HCT116 (cell line): ENCODE measurements at regions of chr1 and their contacts with region 1.

Region 1: DNA sequence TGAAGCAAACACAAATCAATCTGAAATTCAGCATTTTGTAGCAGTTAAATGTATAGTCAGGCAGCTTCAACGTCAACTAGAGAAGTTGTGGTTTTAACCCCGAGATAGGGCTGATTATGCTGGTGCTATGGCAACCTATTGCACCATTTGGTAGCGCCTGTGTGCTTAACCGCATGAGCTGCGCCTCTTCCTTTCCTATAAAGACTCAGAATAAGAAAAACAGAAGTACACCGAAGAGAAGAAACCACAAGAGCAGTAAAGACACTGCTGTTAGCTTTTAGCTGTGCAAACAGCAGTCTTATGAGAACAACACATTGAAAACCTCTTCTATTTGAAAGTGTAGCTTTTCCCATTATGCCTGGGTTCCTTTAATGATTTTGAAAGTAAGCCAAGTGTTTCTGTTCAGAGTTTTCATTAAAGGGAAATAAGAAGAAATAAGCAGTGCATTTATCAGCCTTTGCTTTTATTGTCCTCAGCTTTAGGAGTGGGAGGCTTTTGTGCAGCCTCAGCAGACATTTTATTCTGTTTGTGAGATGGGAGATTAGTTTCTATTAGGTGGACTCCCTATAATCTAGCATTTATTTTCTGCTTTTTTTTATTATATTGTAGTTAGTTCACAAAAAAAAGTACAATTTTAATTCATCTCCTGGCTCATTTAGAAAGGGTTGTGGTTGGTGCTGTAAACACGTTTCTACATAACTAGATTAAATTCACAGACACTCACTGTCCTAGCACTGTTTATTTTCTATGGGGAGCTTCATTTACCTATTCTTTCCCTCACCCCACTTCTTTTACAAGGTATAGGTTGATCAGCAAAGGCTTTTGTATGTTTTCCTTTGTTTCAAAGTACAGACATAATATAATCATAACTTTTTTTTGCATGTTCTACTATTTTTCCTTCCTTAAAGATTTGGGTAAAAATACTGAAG is 43.3 kb downstream of the PTPRC start:
- DNase-seq: no peak
- ATAC-seq: no peak
- H3K4me3 ChIP-seq: no peak overlapping the region
- H3K27ac ChIP-seq: no peak overlapping the region
- H3K4me1 ChIP-seq: no peaks in the 10 kb centered on the region
- H3K27me3 ChIP-seq: no peaks in the 10 kb centered on the region
- CTCF ChIP-seq: no peak
- POLR2A ChIP-seq: no peak
- RAD21 ChIP-seq: no peak

Region 2: GRCh38 chr1:197521118-197521739 is 1160.9 kb before region 1 on chr1:
- CTCF ChIA-PET with region 1: interaction called, 8 read pairs
- POLR2A ChIA-PET with region 1: no interaction called
- RAD21 ChIA-PET with region 1: no interaction called
- intact Hi-C with region 1: loop called (anchors 5 kb)
- DNase-seq: peak; percentile 16
- ATAC-seq: peak; percentile 60; the same call in 1 of the 2 replicates
- H3K4me3 ChIP-seq: no peak overlapping the region
- H3K27ac ChIP-seq: no peak overlapping the region
- H3K4me1 ChIP-seq: no peaks in the 10 kb centered on the region
- H3K27me3 ChIP-seq: no peaks in the 10 kb centered on the region
- CTCF ChIP-seq: peak; percentile 45 to 77 (median 63); a peak in 5 of 6 replicates
- POLR2A ChIP-seq: no peak
- RAD21 ChIP-seq: peak; percentile 61

Region 3: GRCh38 chr1:197924516-197925123 is 757.5 kb before region 1 on chr1:
- CTCF ChIA-PET with region 1: interaction called, 3 read pairs
- POLR2A ChIA-PET with region 1: no interaction called
- RAD21 ChIA-PET with region 1: no interaction called
- intact Hi-C with region 1: loop called (anchors 10 kb)
- DNase-seq: peak; percentile 51
- ATAC-seq: peak; percentile 96
- H3K4me3 ChIP-seq: no peak overlapping the region
- H3K27ac ChIP-seq: no peak overlapping the region
- H3K4me1 ChIP-seq: no peaks in the 10 kb centered on the region
- H3K27me3 ChIP-seq: no peaks in the 10 kb centered on the region
- CTCF ChIP-seq: peak; percentile 77 to 88 (median 84)
- POLR2A ChIP-seq: no peak
- RAD21 ChIP-seq: peak; percentile 86

Region 4: GRCh38 chr1:198088360-198089071 is 593.6 kb before region 1 on chr1:
- CTCF ChIA-PET with region 1: interaction called, 3 read pairs
- POLR2A ChIA-PET with region 1: no interaction called
- RAD21 ChIA-PET with region 1: no interaction called
- intact Hi-C with region 1: loop called (anchors 5 kb)
- DNase-seq: peak; percentile 28
- ATAC-seq: peak; percentile 78
- H3K4me3 ChIP-seq: no peak overlapping the region
- H3K27ac ChIP-seq: no peak overlapping the region
- H3K4me1 ChIP-seq: no peaks in the 10 kb centered on the region
- H3K27me3 ChIP-seq: no peaks in the 10 kb centered on the region
- CTCF ChIP-seq: peak; percentile 60 to 73 (median 63); a peak in 5 of 6 replicates
- POLR2A ChIP-seq: no peak
- RAD21 ChIP-seq: peak; percentile 73

Region 5: DNA sequence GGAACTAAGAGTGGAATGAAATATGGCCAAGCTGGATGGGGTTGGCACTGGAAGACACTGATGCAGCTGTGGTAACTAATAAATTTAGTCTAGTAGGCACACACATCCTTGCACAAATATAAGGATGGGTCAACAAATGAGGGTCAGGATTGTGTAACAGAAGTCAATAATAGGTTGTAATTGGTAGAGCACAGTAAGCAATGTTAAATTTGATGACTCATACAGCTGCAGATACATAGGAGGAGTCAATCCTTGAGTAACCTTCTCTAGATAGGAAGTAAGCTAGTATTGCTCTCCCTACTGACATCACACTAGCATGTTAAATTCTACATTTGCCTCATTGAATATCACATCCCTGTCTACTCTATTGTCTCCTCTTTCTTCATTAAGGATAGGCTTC is 288.8 kb after region 1 on chr1:
- CTCF ChIA-PET with region 1: no interaction called
- POLR2A ChIA-PET with region 1: no interaction called
- RAD21 ChIA-PET with region 1: no interaction called
- intact Hi-C with region 1: no loop called
- DNase-seq: no peak
- ATAC-seq: no peak
- H3K4me3 ChIP-seq: no peak overlapping the region
- H3K27ac ChIP-seq: no peak overlapping the region
- H3K4me1 ChIP-seq: no peaks in the 10 kb centered on the region
- H3K27me3 ChIP-seq: no peaks in the 10 kb centered on the region
- CTCF ChIP-seq: no peak
- POLR2A ChIP-seq: no peak
- RAD21 ChIP-seq: no peak